Pancreas (tissue), 10 donors: ENCODE measurements at regions of chr9 and their contacts with region 1.

Region 1: GRCh38 chr9:76441551-76442322 is 17.2 kb upstream of the GCNT1 start:
- DNase-seq: no peak
- ATAC-seq: no peak
- H3K4me3 ChIP-seq: no peak overlapping the region
- H3K27ac ChIP-seq: no peak overlapping the region
- H3K4me1 ChIP-seq: no peaks in the 10 kb centered on the region
- H3K27me3 ChIP-seq: no peaks in the 10 kb centered on the region
- CTCF ChIP-seq: no peak

Region 2: GRCh38 chr9:76658535-76659231 is 216.9 kb after region 1 on chr9:
- intact Hi-C with region 1: loop called (anchors 5 to 10 kb)
- DNase-seq: no peak
- ATAC-seq: peak; percentile 81 to 98 (median 94)
- H3K4me3 ChIP-seq: no peak overlapping the region
- H3K27ac ChIP-seq: no peak overlapping the region
- H3K4me1 ChIP-seq: no peaks in the 10 kb centered on the region
- H3K27me3 ChIP-seq: no peaks in the 10 kb centered on the region
- CTCF ChIP-seq: peak; percentile 5 to 40 (median 20)

Region 3: GRCh38 chr9:76704593-76705204 is 263.0 kb after region 1 on chr9:
- intact Hi-C with region 1: loop called in 1 of 3 experiments (anchors 5 kb)
- DNase-seq: peak in 1 of 6 donors; percentile 18
- ATAC-seq: peak in 3 of 4 donors; percentile 86 to 89 (median 89)
- H3K4me3 ChIP-seq: no peak overlapping the region
- H3K27ac ChIP-seq: no peak overlapping the region
- H3K4me1 ChIP-seq: no peaks in the 10 kb centered on the region
- H3K27me3 ChIP-seq: peaks cover 0 to 3% (median 2%) of the 10 kb centered on the region in 4 donors
- CTCF ChIP-seq: peak in 3 of 4 donors; percentile 25 to 57 (median 48)